Dorsolateral prefrontal cortex (tissue), 120 donors: ENCODE measurements at regions of chr19 and their contacts with region 1.

Region 1: DNA sequence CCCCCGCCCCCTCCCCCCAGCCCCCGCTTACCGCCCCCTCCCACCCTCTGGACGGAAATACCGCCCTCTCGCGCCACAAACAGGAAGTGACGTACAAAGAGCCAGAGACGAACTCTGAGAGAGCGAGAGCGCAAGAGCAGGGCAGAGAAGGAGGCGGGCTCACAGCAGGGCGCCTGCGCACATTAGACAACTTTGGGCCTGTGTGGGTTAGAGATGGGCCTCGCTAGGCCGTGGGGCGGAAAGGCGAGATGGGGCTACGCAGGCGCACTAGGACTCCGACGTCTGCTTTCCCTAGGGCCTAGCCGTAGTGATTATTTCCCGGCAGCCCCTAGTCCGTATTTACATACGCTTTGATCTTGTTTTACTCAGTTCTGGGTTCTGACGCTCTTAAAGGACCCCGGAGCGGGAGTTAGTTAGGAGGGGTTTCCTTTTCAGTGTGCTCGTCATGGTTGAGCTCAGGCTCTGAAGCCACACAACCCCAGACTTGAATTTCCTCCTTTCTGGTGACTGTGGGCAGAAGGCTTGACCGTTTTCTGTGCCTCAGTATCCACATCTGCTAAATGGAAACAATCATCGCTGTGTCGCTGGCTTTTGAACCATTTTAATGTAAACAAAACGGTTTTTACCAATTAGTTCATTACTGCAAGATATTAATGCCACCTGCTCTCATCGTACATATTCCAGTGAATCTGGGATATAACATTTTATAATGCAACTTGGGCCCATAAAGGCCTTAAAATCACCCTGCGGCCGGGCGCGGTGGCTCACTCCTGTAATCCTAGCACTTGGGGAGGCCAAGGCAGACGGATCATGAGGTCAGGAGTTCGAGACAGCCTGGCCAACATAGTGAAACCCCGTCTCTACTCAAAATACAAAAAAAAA is 449 bp upstream of the AKT2 start:
- DNase-seq: peak; percentile 98 to 100 (median 99)
- H3K4me3 ChIP-seq: peak overlapping the region; percentile 50 to 96 (median 91)
- H3K27ac ChIP-seq: peak overlapping the region; percentile 86 to 100 (median 98)
- H3K27me3 ChIP-seq: no peaks in the 10 kb centered on the region
- CTCF ChIP-seq: peak in 22 of 56 donors; percentile 4 to 51 (median 20)

Region 2: GRCh38 chr19:40147693-40148347 is 137.8 kb before region 1 on chr19:
- intact Hi-C with region 1: no loop called
- DNase-seq: peak in 2 of 10 donors; percentile 21 to 28
- H3K4me3 ChIP-seq: peak overlapping the region in 50 of 59 donors; percentile 3 to 55 (median 42)
- H3K27ac ChIP-seq: peak overlapping the region in 27 of 59 donors; percentile 1 to 74 (median 35)
- H3K27me3 ChIP-seq: no peaks in the 10 kb centered on the region
- CTCF ChIP-seq: no peak

Region 3: GRCh38 chr19:40190891-40191835 is 94.4 kb before region 1 on chr19 and contains the start of gene MAP3K10:
- intact Hi-C with region 1: loop called in 1 of 2 experiments (anchors 2 kb)
- DNase-seq: peak; percentile 67 to 90 (median 78)
- H3K4me3 ChIP-seq: peak within 1 kb of the TSS; percentile 66 to 99 (median 93)
- H3K27ac ChIP-seq: peak within 1 kb of the TSS; percentile 90 to 100 (median 99)
- H3K27me3 ChIP-seq: no peaks in the 10 kb centered on the region
- CTCF ChIP-seq: peak in 7 of 56 donors; percentile 3 to 17 (median 9)
- total RNA-seq, gene MAP3K10: 72.4 to 232 (median 136) TPM

Region 4: DNA sequence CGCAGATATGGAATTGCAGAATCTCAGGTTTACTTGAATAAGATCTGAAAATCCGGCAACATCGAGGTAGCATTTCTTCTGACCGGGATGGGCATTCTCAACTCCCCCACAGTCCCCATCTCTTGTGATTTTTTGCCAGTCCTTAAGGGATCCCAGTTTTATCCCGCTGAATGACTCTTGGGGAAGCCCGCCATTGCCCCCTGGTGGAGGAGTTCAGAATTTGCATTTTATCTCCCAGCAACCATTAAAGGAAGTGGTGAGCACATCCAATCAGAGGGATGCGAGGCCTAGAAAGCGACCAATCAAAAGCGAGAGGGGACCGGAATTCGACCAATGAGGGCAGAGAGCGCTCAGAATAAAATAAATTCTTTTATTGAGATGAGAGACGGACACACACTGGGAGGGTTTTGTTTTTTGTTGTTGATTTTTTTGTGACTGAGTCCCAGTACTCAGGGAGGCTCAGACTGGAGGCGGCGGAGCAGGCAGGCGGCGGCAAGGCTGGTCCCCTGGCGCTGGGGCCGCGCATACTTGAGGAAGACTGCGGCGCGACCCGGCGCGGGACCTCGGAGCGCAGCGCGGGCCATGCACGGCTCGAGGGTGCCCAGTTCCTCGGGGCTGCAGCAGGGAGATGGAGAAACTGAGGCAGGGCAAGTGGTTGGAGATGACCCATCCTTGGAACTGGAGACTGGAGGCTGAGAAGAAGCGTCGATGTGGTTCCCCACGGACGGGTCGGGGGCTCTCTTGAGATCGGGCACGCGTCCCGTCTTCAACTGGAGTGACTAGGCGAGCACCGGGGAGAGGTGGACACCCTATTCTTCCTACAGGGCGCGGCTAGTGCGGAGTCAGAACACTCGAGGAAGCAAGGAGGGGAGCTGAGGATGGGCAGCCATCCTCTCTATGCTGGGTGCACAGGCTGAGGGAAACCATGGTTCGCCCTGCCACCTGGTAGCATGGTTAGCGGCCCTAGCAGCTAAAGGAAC is 63.4 kb before region 1 on chr19:
- intact Hi-C with region 1: loop called (anchors 5 to 10 kb)
- DNase-seq: peak; percentile 52 to 93 (median 83)
- H3K4me3 ChIP-seq: peak overlapping the region in 3 of 59 donors; percentile 6 to 18 (median 9)
- H3K27ac ChIP-seq: peak overlapping the region in 1 of 59 donors; percentile 12
- H3K27me3 ChIP-seq: peaks cover 0 to 38% (median 8%) of the 10 kb centered on the region in 45 donors
- CTCF ChIP-seq: peak; percentile 84 to 98 (median 92)

Region 5: DNA sequence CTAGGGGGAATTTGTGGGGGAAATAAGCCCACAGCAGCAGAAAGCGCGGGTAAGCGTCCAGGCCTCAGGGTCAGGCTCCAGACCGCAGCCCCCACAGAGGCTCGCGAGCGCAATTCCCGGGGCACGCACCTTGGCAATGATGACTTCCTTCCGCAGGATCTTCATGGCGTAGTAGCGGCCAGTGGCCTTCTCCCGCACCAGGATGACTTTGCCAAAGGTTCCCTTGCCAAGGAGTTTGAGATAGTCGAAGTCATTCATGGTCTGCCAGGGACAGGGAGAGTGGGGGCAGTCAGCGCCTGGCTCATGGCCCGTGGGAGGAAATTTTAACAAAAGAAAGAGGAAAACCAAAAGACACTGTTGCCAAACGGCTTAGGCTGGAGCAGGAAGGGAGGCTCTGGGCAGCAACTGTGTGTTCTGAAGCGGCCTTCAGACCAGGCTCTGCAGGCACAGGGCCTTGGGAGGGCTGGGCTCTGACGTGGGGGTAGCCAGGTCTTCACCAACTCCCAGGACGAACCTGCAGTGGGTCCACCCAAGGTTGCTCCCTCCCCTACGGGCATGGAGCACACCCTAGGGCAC is 43.7 kb before region 1 on chr19:
- intact Hi-C with region 1: loop called (anchors 2 to 5 kb)
- DNase-seq: peak; percentile 58 to 88 (median 80)
- H3K4me3 ChIP-seq: peak overlapping the region in 24 of 59 donors; percentile 2 to 37 (median 20)
- H3K27ac ChIP-seq: peak overlapping the region; percentile 5 to 97 (median 90)
- H3K27me3 ChIP-seq: no peaks in the 10 kb centered on the region
- CTCF ChIP-seq: peak in 19 of 56 donors; percentile 6 to 51 (median 22)

Region 6: GRCh38 chr19:40348125-40348913 is 62.7 kb after region 1 on chr19 and contains the starts of genes C19orf47 and PLD3:
- intact Hi-C with region 1: loop called in 1 of 2 experiments (anchors 10 kb)
- DNase-seq: peak; percentile 99 to 100 (median 100)
- H3K4me3 ChIP-seq: peak within 1 kb of the TSS; percentile 55 to 98 (median 86)
- H3K27ac ChIP-seq: peak within 1 kb of the TSS in 58 of 59 donors; percentile 4 to 95 (median 84)
- H3K27me3 ChIP-seq: no peaks in the 10 kb centered on the region
- CTCF ChIP-seq: peak in 26 of 56 donors; percentile 6 to 54 (median 29)
- total RNA-seq, gene C19orf47: 26.8 to 54.6 (median 37.4) TPM
- total RNA-seq, gene PLD3: 322 to 718 (median 553) TPM

Region 7: GRCh38 chr19:40398417-40399131 is 113.0 kb after region 1 on chr19:
- intact Hi-C with region 1: no loop called
- DNase-seq: peak in 1 of 10 donors; percentile 11
- H3K4me3 ChIP-seq: peak overlapping the region in 21 of 59 donors; percentile 3 to 49 (median 18)
- H3K27ac ChIP-seq: no peak overlapping the region
- H3K27me3 ChIP-seq: peaks cover 0 to 7% (median 0%) of the 10 kb centered on the region in 45 donors
- CTCF ChIP-seq: no peak

Region 8: DNA sequence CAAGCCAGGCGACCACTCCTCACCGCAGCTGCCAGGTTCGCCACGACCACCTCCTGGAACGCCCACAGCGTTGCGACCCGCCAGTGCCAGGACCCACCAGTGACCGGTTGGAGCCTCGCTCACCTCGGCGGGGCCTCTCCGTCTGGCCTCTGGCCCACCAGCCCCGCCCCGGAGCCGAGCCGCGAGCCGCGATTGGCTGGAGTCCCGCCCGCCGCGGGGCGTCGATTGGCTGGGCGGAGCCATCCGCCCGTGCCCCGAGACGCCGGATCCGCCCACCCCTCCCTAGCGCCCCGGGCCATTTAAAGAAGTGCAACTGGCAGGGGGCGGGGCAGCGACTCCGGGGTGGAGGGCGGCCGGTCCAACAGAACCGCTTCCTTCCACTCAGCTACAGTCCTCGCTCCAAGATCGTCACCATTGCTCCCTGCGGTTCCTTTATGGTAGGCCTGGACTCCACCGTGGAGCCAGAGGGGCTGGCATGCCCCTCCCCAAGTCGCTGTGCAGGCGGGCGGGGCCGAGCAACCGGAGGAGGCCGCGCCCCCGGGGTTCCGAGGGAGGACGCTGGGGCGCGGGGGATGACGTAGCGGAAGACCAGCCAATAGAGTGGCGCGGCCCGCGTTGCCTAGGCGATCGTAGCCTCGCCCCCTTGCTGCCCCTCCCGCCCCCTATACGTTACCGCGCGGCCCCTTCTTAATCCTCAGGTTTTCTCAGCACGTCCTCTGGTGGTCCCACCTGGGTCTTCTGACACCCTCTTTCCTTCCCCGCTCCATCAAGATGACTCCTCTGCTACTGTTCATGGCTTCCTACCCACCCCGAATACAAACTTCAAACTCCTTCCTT is 158.8 kb after region 1 on chr19 and contains the start of gene SERTAD3:
- intact Hi-C with region 1: loop called in 1 of 2 experiments (anchors 10 kb)
- DNase-seq: peak; percentile 93 to 99 (median 95)
- H3K4me3 ChIP-seq: peak within 1 kb of the TSS; percentile 50 to 94 (median 83)
- H3K27ac ChIP-seq: peak within 1 kb of the TSS; percentile 82 to 99 (median 97)
- H3K27me3 ChIP-seq: no peaks in the 10 kb centered on the region
- CTCF ChIP-seq: peak in 36 of 56 donors; percentile 5 to 54 (median 24)
- total RNA-seq, gene SERTAD3: 3.5 to 29.8 (median 9.8) TPM

Region 9: DNA sequence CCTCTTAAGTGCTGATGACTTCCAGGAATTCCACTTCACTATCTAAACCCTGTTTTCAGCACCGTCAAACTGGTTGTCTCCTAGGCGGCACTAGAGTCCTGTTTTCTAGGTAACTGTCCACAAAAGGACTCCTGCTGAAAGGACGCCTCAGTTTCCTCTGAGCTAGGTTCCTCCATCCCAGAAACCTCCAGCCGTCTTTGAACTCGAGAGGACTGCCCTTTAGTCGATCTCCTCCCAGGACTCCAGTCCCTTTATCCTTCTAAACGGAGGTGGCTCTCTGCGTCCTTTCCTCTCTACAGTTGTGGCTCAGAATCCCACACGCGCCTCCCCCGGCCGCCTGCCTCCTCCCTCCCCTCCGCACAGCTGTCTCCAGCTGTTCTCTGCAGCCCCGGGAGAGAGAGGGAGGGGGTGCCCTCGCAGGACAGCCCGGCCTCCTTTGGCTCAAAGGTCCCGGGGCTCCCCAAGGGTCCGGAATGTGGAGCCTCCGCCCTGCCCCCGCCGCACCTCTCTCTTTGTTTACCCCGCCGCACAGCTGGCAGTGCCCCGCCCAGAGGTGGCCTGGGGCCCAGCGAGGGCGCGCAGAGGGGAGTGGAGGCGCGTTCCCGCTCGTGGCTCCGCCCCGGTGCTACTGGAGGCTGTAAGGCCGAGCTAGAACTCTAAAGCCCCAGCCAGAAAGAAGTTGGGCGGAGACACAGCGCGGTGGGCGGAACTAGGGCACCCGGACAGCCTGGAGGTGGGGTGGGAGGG is 318.0 kb after region 1 on chr19:
- intact Hi-C with region 1: loop called in 1 of 2 experiments (anchors 10 kb)
- DNase-seq: peak; percentile 71 to 95 (median 88)
- H3K4me3 ChIP-seq: peak overlapping the region; percentile 20 to 72 (median 53)
- H3K27ac ChIP-seq: peak overlapping the region in 53 of 59 donors; percentile 4 to 88 (median 75)
- H3K27me3 ChIP-seq: peaks cover 0 to 28% (median 0%) of the 10 kb centered on the region in 45 donors
- CTCF ChIP-seq: peak in 19 of 56 donors; percentile 9 to 54 (median 19)